Activated naive CD4-positive, alpha-beta T cell treated with anti-CD3 and anti-CD28 coated beads, Interleukin-2, amount 10 ng/mL, durations not matched to agents 7 days and 5 days (primary cell): ENCODE measurements at regions of chr12 and their contacts with region 1.

Region 1: DNA sequence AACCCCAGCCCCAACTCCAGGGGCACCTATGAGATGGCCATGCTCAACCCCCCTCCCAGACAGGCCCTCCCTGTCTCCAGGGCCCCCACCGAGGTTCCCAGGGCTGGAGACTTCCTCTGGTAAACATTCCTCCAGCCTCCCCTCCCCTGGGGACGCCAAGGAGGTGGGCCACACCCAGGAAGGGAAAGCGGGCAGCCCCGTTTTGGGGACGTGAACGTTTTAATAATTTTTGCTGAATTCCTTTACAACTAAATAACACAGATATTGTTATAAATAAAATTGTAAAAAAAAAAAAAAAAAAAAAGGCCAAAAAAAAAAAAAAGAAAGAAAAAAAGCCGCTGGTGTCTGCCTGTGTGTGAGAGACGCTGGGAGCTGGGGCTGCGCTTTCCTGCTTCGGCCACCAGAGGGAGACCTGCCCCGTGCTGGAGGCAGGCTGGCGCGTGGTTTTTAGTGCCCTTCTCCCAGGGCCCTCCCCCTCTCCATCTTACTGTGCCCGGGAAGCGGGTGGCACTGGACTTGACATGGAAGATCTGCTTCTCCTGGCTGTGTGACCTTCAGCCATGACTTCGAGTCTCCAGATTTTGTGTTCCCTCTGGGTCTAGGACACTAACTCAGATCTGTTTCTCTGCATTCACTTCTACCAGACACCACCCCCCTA is 3.4 kb upstream of the NXPH4 start:
- DNase-seq: peak; percentile 90
- H3K4me3 Mint-ChIP-seq: no peak overlapping the region
- H3K27ac Mint-ChIP-seq: no peak overlapping the region
- H3K4me1 Mint-ChIP-seq: peaks cover 37% of the 10 kb centered on the region
- H3K27me3 Mint-ChIP-seq: peaks cover 62% of the 10 kb centered on the region

Region 2: DNA sequence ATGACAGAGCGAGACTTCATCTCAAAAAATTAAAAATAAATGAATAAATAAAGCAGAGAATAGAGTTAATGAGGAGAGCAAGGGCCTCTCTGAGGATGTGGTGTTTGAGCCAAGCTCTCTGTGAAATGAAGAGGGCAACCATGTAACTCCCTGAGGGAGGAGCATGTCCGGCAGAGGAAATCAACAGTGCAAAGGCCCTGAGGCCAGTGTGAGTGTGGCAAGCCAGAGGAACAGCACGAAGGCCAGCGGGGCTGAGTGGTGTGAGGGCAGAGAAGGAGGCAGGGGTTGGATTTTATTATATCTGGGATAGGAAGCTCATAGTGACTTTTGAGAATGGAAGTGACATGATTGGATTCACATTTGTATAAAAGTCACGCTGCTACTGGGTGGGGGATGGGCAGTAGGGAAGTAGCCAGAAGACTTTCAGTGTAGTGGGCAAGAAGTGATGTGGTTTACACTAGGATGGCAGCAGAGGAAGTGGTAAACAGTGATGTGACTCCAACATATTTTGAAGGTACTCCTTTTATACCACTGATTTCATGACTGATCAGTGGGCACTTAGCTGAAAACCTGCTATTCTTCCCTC is 55.5 kb before region 1 on chr12:
- CTCF ChIA-PET with region 1: no interaction called
- DNase-seq: no peak
- H3K4me3 Mint-ChIP-seq: no peak overlapping the region
- H3K27ac Mint-ChIP-seq: peak overlapping the region; percentile 20
- H3K4me1 Mint-ChIP-seq: peaks cover 12% of the 10 kb centered on the region
- H3K27me3 Mint-ChIP-seq: peaks cover 18% of the 10 kb centered on the region

Region 3: DNA sequence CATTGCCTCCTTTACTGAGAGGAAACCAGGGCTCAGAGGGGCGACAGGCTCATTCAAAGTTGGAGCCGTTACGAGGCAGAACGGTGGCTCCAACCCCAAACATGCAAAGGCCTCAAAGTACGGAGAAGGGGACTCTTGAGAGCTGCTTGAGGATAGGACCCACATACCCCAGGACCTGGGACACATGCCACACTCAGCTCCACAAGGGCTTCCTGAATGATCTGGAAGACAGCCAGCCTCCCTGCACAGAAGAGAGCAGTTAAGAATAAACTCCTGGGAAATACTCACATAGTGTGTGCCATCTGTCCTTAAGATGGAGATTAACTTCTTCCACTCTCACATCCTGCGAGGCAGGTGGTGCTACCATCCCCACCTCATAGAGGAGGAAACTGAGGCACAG is 23.1 kb before region 1 on chr12:
- CTCF ChIA-PET with region 1: interaction called, 16 read pairs
- DNase-seq: no peak
- H3K4me3 Mint-ChIP-seq: no peak overlapping the region
- H3K27ac Mint-ChIP-seq: no peak overlapping the region
- H3K4me1 Mint-ChIP-seq: no peaks in the 10 kb centered on the region
- H3K27me3 Mint-ChIP-seq: peaks cover 3% of the 10 kb centered on the region

Region 4: DNA sequence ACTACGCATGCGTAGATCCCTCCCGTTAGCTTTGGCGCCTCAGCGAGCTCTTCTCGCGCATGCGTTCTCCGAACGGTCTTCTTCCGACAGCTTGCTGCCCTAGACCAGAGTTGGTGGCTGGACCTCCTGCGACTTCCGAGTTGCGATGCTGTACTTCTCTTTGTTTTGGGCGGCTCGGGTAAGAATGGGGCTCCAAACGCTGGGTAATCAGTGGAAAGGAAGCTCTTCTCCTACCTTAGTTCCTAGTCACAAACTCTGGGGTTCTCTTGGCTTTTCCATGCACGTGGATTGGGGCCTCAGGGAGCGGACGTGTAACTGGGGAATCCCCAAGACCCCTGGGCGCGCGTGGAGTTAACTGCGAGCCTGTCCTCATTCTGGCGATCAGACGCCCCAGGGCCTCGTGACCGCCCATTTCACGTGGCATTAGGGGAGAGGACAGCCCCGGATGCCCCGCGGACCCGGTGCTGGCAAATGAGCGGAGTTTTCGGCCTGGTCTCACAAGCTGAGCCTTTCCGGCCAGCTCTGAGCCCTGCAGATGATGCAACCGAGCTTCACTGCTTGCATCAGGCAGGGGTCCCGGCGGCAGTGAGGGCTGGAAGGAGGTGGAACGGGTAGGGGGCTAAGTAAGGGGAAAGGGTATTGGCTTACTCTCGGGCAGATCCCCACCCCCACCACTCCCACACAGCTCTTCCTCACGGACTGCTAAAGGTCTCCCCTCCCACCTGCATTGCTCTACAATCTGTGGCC is 16.6 kb after region 1 on chr12 and contains the start of gene SHMT2:
- CTCF ChIA-PET with region 1: interaction called, 115 read pairs
- DNase-seq: peak; percentile 95
- H3K4me3 Mint-ChIP-seq: peak within 1 kb of the TSS; percentile 92
- H3K27ac Mint-ChIP-seq: peak within 1 kb of the TSS; percentile 89
- H3K4me1 Mint-ChIP-seq: peaks cover 76% of the 10 kb centered on the region
- H3K27me3 Mint-ChIP-seq: peaks cover 36% of the 10 kb centered on the region

Region 5: DNA sequence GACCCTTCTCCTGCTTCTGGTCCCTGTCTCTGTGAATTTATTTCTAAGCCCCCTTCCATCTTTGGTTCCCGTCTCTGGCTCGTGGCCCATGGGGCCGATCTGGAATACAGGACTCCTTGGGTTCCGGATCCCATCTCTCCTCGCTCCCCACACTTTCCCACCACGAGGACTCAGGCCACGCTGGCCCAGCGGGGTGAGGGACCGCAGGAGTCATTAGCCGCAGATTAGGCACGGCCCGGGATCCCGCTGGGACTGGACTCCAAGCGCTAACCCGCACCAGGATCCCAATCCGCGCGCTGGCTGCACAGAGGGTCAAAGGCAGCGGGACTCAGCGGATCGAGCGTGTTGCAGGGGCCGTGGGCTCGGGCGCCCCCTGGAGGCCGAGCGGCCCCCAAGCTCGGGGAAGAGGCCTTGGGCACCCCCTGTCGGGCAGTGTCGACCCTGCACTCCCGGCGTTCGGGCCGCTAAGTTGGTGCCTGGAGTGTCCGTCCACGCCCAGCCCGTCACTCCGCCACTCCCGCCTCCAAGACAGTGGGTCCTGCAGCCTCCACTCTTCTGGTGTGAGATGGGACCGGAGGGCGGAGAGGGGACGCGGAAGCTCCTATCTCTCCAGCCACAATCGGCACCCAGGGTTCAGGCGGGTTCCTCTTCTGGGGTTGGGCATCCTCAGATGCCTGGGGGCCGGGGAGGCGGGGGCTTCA is 25.8 kb after region 1 on chr12:
- CTCF ChIA-PET with region 1: interaction called, 318 read pairs
- DNase-seq: peak; percentile 90
- H3K4me3 Mint-ChIP-seq: peak overlapping the region; percentile 95
- H3K27ac Mint-ChIP-seq: peak overlapping the region; percentile 49
- H3K4me1 Mint-ChIP-seq: peaks cover 87% of the 10 kb centered on the region
- H3K27me3 Mint-ChIP-seq: peaks cover 89% of the 10 kb centered on the region

Region 6: DNA sequence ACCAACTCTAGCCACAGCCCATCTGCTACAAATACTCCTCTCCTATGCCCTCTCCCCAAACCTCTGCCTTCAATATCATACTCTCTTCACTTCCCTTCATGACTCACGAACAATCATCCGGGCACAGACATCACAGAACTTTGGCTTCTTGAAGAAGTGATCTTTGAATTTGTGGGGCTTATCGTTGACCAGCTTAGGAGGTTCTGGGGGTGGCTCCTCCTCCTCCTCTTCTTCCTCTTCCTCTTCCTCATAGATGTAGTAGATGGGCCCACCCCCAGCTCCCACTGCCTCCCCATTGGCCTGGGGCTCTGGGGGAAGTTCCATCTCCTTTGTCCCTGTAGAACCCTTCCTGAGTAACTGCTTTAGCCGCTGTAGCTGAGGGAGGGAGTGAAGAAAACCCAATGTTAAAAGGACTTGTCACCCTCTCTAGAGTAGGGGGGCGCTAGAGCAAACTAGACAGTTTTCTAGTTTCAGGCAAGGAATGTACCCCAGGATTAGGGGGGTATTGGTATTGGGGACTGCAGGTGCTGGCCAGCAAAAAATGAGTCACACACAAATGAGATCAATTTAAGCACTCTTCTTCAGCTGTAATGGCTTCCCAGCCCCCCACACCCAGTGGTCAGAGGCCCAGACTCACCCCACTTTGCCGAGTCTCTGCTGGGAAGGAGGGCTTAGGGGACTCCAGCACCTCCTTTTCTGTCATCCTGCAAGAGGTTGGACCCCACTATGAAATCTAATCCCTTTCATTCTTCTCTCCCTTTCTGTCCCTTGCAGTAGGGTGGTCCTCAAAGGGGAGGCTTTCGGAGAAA is 36.0 kb after region 1 on chr12:
- CTCF ChIA-PET with region 1: interaction called, 318 read pairs
- DNase-seq: no peak
- H3K4me3 Mint-ChIP-seq: peak overlapping the region; percentile 19
- H3K27ac Mint-ChIP-seq: no peak overlapping the region
- H3K4me1 Mint-ChIP-seq: peaks cover 11% of the 10 kb centered on the region
- H3K27me3 Mint-ChIP-seq: peaks cover 10% of the 10 kb centered on the region

Region 7: GRCh38 chr12:57452937-57453509 is 239.8 kb after region 1 on chr12:
- CTCF ChIA-PET with region 1: interaction called, 16 read pairs
- DNase-seq: peak; percentile 74
- H3K4me3 Mint-ChIP-seq: no peak overlapping the region
- H3K27ac Mint-ChIP-seq: no peak overlapping the region
- H3K4me1 Mint-ChIP-seq: peaks cover 18% of the 10 kb centered on the region
- H3K27me3 Mint-ChIP-seq: peaks cover 48% of the 10 kb centered on the region

Region 8: DNA sequence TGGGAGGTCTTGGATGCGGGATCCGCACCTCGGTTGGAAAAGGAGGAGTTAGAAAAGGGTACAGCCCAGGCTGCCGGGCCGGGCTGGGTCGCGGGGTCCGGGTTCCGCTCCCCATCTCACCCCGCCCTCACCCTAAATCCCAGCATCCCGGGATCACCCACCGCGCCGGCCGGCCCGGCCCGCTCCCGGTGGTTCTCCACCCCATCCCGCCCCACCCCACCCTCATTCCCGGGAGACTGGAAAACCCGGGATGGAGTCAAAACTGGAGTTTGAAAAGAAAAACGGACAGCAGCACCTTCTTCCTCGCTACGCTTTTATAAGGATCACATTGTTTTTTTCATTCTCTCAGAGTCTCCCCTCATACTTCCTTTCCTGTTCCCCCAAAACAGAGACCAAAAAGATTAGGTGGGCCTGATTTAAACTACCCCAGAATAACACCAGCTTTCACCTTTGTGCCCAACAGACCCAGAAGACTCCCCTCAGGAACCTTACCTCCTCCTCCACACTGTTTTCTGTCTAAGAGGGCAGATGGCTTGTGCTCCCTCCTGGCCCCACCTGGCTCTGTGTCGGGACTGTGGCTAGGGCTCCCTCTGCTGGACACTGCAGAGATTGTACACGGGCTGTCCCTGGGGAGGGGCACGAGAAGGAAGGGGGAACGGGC is 249.2 kb after region 1 on chr12:
- CTCF ChIA-PET with region 1: interaction called, 10 read pairs
- DNase-seq: peak; percentile 93
- H3K4me3 Mint-ChIP-seq: peak overlapping the region; percentile 81
- H3K27ac Mint-ChIP-seq: peak overlapping the region; percentile 77
- H3K4me1 Mint-ChIP-seq: peaks cover 58% of the 10 kb centered on the region
- H3K27me3 Mint-ChIP-seq: peaks cover 50% of the 10 kb centered on the region